Breast epithelium (tissue), 4 donors: ENCODE measurements at regions of chr10 and their contacts with region 1.

Region 1: DNA sequence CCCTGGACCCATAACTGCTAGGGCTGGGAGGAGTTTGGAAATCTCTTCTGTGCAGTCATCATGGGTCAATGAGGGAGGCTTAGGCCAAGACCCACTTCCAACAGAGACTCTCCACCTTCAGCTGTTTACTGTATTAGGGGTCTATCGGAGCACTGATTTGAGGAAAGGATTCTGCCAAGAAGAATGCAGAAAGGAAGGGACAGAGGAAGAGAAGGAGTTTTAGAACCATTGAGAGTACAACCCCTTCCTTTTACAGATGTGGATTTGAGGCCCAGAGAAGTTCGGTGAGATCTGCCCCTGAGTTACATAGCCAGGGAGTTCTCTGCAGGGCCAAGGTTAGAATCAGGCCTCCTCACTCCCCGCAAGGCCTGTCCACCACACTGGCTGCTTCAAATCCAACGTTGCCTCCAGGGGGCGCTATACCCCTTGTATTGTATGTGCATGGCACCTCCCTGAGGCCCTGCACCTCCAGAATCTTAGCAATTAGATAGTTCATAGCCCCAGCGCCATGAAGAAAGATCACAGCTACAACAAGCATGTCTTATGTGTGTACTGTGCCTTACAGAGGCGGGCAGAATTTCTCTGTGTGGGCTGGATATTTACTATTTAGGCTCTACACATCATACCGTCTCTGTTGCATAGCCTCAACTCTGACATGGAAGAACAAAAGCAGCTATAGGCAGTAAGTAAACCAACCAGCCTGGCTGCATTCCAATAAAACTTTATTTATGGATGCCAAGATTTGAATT is 246.8 kb downstream of the SKIDA1 start:
- DNase-seq: peak; percentile 86 to 91
- H3K4me3 ChIP-seq: no peak overlapping the region
- H3K27ac ChIP-seq: no peak overlapping the region
- H3K4me1 ChIP-seq: no peaks in the 10 kb centered on the region
- H3K27me3 ChIP-seq: no peaks in the 10 kb centered on the region
- CTCF ChIP-seq: peak; percentile 74 to 84 (median 83)
- POLR2A ChIP-seq: no peak

Region 2: GRCh38 chr10:21078410-21079329 is 200.0 kb before region 1 on chr10:
- intact Hi-C with region 1: loop called (anchors 10 kb)
- DNase-seq: peak; percentile 47 to 63
- H3K4me3 ChIP-seq: no peak overlapping the region
- H3K27ac ChIP-seq: no peak overlapping the region
- H3K4me1 ChIP-seq: no peaks in the 10 kb centered on the region
- H3K27me3 ChIP-seq: no peaks in the 10 kb centered on the region
- CTCF ChIP-seq: peak; percentile 24 to 81 (median 74)
- POLR2A ChIP-seq: no peak